ENCODE measurements at regions of chr12 and their contacts with region 1.

Region 1: GRCh38 chr12:69585189-69586062 is at the start of gene CCT2:
- DNase-seq: peak; percentile 90
- H3K4me3 ChIP-seq: peak within 1 kb of the TSS; percentile 75 to 96 (median 80)
- H3K27ac ChIP-seq: peak within 1 kb of the TSS; percentile 94
- H3K4me1 ChIP-seq: peaks cover 4% of the 10 kb centered on the region
- H3K27me3 ChIP-seq: no peaks in the 10 kb centered on the region
- CTCF ChIP-seq: peak in 1 of 2 donors; percentile 43
- total RNA-seq, gene CCT2: 208 to 237 TPM

Region 2: GRCh38 chr12:69388371-69388770 is 197.1 kb before region 1 on chr12:
- CTCF ChIA-PET with region 1: no interaction called
- dilution Hi-C with region 1: no loop called
- in situ Hi-C with region 1: no loop called
- intact Hi-C with region 1: loop called (anchors 5 kb)
- DNase-seq: peak; percentile 37
- H3K4me3 ChIP-seq: no peak overlapping the region
- H3K27ac ChIP-seq: no peak overlapping the region
- H3K4me1 ChIP-seq: peaks cover 6% of the 10 kb centered on the region
- H3K27me3 ChIP-seq: no peaks in the 10 kb centered on the region
- CTCF ChIP-seq: peak; percentile 50 to 56

Region 3: DNA sequence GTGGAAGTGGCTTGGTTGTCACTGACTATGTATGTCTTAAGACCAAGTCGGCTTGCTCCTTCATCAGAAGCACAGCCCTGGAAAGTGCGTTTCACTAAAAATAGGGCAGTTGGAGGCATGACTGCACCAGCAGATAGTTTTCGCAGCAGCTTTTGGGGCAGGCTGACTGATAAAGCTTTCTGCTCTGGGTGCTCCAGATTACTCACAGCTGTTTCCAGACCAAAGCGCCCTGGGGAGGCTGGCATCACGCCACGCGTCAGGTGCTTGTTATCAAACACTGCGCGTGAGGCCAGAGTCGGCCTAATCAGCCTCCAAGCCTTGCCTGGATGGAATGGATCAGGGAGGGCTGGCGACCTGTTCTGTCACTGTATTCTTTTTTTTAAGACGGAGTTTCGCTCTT is 38.5 kb after region 1 on chr12:
- CTCF ChIA-PET with region 1: no interaction called
- dilution Hi-C with region 1: loop called (anchors 5 kb)
- in situ Hi-C with region 1: no loop called
- intact Hi-C with region 1: no loop called
- DNase-seq: no peak
- H3K4me3 ChIP-seq: no peak overlapping the region
- H3K27ac ChIP-seq: no peak overlapping the region
- H3K4me1 ChIP-seq: no peaks in the 10 kb centered on the region
- H3K27me3 ChIP-seq: no peaks in the 10 kb centered on the region
- CTCF ChIP-seq: no peak